Activated naive CD4-positive, alpha-beta T cell treated with anti-CD3 and anti-CD28 coated beads for 36 hours (primary cell): ENCODE measurements at regions of chr4 and their contacts with region 1.

Region 1: DNA sequence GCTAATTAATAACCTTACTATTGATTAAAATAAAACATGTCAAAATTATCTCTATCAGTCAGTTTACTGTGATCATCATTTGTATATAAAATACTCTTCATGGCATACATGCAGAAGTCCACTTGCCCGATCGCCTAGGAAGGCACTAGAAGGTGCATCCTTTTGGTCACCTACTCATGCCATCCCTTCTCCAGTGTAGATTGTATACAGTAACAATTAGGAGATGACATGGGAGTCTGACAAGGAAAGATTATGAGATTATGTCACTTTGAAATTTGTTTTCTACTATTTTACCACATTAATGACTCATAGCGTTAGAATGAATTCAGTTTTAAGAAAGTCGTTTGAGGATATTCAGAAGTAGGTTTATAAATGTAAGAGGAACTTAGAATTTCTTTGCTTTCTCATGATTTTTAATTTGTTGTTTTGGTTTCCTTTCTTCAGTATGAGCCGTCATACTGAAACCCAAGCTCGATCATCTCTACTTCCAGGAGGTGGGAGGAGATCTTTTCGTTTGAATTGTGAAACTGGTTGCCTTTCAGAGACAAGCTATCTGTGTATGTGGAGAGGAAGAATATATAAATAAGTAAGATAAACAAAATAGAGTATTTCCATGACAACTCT is 51.1 kb upstream of the UNC5C start:
- DNase-seq: peak; percentile 4
- H3K4me3 Mint-ChIP-seq: no peak overlapping the region
- H3K27ac Mint-ChIP-seq: no peak overlapping the region
- H3K4me1 Mint-ChIP-seq: peaks cover 7% of the 10 kb centered on the region
- H3K27me3 Mint-ChIP-seq: no peaks in the 10 kb centered on the region

Region 2: DNA sequence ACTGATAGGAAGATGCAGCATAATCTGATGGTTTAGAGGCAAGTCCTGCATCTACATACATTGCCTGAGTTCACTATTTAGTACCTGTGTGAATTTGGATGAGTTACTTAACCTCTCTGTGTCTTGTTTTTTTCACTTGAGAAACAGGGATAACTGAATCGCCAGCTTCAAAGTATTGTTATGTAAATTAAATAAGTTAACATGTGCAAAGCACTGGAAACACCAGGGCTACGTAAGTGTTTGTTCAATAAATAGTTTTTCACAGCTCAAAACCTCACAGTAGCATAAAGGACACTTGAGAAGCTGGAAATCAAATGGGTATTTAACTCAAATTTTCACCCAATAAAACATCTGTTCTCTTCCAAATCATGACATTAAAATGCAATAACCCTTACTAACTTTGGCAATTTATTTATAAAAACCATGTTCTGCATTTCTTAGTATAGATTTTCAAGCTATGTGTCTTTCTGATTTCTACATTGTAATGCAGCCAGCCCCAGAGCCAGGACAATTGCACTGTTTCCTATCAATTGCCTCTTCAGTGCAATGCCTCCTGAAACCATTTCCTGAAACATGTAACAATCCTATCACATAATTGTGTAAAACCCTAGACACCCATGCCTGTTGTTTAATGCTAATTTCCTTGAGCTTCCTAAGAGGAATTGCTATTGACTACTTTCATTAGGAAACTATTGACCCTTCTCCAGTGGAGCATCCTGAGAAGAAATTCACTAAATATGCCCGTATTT is 228.2 kb before region 1 on chr4:
- CTCF ChIA-PET with region 1: no interaction called
- intact Hi-C with region 1: no loop called
- DNase-seq: no peak
- H3K4me3 Mint-ChIP-seq: no peak overlapping the region
- H3K27ac Mint-ChIP-seq: no peak overlapping the region
- H3K4me1 Mint-ChIP-seq: no peaks in the 10 kb centered on the region
- H3K27me3 Mint-ChIP-seq: no peaks in the 10 kb centered on the region

Region 3: GRCh38 chr4:95510145-95510544 is 89.7 kb before region 1 on chr4:
- CTCF ChIA-PET with region 1: no interaction called
- intact Hi-C with region 1: loop called (anchors 5 kb)
- DNase-seq: no peak
- H3K4me3 Mint-ChIP-seq: no peak overlapping the region
- H3K27ac Mint-ChIP-seq: no peak overlapping the region
- H3K4me1 Mint-ChIP-seq: no peaks in the 10 kb centered on the region
- H3K27me3 Mint-ChIP-seq: peaks cover 8% of the 10 kb centered on the region

Region 4: GRCh38 chr4:95549246-95550114 is 50.4 kb before region 1 on chr4:
- CTCF ChIA-PET with region 1: no interaction called
- intact Hi-C with region 1: loop called (anchors 5 kb)
- DNase-seq: peak; percentile 48
- H3K4me3 Mint-ChIP-seq: peak overlapping the region; percentile 68
- H3K27ac Mint-ChIP-seq: no peak overlapping the region
- H3K4me1 Mint-ChIP-seq: peaks cover 15% of the 10 kb centered on the region
- H3K27me3 Mint-ChIP-seq: peaks cover 44% of the 10 kb centered on the region